Heart left ventricle (tissue), 16 donors: ENCODE measurements at regions of chr9 and their contacts with region 1.

Region 1: GRCh38 chr9:91193658-91194391 is 167.9 kb downstream of the AUH start:
- DNase-seq: peak; percentile 83 to 94 (median 90)
- ATAC-seq: peak; percentile 48 to 74 (median 72)
- H3K4me3 ChIP-seq: peak overlapping the region; percentile 13 to 70 (median 50)
- H3K27ac ChIP-seq: peak overlapping the region; percentile 95 to 100 (median 98)
- H3K4me1 ChIP-seq: peaks cover 6 to 75% (median 43%) of the 10 kb centered on the region in 12 donors
- H3K27me3 ChIP-seq: no peaks in the 10 kb centered on the region
- CTCF ChIP-seq: peak in 2 of 12 donors; percentile 10 to 19
- POLR2A ChIP-seq: no peak

Region 2: DNA sequence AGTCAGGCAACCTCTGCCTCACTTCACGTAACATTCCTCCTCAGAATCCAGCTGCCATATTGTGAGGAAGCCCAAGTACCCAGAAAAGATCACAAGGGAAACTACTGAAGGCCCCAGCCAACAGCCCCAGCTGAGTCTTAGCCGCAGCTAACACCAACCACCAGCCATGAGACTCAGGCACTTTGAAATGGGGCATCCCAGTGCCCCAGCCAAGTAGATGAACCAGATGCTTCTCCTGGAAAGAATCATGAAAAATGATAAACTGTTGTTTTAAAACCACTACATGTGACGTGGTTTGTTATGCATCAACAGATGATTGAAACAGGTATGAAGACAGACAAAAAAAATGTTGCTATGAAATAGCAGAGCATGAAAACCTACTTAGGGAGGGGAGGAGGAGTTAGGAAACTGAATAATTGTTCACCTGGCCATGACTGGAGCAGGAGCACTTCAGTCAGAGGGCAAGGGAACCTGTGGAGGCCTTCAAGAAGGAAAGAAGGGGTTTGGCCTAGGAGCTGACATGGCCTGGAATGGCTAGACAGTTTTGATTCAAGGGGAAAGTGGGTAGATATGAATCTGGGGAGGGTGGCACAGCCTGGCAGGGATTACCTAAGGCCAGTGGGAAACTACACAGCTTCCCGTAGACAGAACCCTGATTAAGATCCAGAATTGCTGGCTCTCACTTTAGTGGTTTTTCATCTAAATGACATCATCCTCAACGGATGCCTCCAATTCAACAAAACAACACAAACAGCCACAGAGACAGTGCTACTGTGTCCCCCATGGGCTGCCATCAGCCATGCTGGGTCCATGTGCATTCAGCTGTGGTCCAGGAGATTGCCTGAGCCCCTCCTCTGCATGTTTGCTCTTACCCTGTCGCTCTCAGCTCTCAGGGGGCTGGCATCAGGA is 180.6 kb before region 1 on chr9:
- intact Hi-C with region 1: no loop called
- DNase-seq: no peak
- ATAC-seq: no peak
- H3K4me3 ChIP-seq: no peak overlapping the region
- H3K27ac ChIP-seq: no peak overlapping the region
- H3K4me1 ChIP-seq: no peaks in the 10 kb centered on the region
- H3K27me3 ChIP-seq: peaks cover 0 to 5% (median 0%) of the 10 kb centered on the region in 9 donors
- CTCF ChIP-seq: no peak
- POLR2A ChIP-seq: no peak

Region 3: GRCh38 chr9:91036826-91037510 is 156.9 kb before region 1 on chr9:
- intact Hi-C with region 1: loop called in 1 of 10 experiments (anchors 10 kb)
- DNase-seq: peak; percentile 76 to 82 (median 78)
- ATAC-seq: peak; percentile 86 to 99 (median 98)
- H3K4me3 ChIP-seq: no peak overlapping the region
- H3K27ac ChIP-seq: no peak overlapping the region
- H3K4me1 ChIP-seq: peaks cover 0 to 20% (median 10%) of the 10 kb centered on the region in 12 donors
- H3K27me3 ChIP-seq: peaks cover 0 to 7% (median 0%) of the 10 kb centered on the region in 9 donors
- CTCF ChIP-seq: peak; percentile 55 to 78 (median 64)
- POLR2A ChIP-seq: no peak

Region 4: DNA sequence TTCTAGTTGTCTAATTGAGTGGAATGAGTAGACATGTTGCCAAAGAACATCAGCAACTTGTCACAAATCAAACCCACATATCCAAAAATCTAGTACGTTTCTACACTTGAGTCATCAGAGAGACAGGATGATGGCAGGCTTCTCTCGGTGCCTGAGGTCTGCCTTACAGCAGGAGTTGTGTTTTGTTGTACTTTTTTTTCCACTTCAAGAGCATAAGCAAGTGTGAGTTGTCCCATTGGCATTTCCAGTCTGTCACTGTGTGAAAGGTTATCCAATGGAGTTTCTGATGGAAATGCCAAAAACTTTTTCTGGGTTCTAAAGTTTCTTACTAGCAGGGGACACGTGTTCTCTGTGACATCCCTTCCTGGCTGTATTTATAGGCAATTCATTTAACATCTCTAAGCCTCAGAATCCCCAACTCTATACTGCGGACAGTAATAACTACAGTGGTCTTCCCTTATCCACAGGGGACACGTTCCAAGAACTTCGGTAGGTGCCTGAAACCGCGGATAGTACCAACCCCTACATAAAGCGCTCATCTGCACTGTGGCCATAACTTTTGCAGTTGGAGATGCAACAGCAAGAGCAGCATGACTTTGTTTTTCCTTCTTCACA is 145.7 kb before region 1 on chr9:
- intact Hi-C with region 1: no loop called
- DNase-seq: no peak
- ATAC-seq: no peak
- H3K4me3 ChIP-seq: no peak overlapping the region
- H3K27ac ChIP-seq: no peak overlapping the region
- H3K4me1 ChIP-seq: peaks cover 0 to 8% (median 0%) of the 10 kb centered on the region in 12 donors
- H3K27me3 ChIP-seq: peaks cover 0 to 12% (median 0%) of the 10 kb centered on the region in 9 donors
- CTCF ChIP-seq: no peak
- POLR2A ChIP-seq: no peak

Region 5: DNA sequence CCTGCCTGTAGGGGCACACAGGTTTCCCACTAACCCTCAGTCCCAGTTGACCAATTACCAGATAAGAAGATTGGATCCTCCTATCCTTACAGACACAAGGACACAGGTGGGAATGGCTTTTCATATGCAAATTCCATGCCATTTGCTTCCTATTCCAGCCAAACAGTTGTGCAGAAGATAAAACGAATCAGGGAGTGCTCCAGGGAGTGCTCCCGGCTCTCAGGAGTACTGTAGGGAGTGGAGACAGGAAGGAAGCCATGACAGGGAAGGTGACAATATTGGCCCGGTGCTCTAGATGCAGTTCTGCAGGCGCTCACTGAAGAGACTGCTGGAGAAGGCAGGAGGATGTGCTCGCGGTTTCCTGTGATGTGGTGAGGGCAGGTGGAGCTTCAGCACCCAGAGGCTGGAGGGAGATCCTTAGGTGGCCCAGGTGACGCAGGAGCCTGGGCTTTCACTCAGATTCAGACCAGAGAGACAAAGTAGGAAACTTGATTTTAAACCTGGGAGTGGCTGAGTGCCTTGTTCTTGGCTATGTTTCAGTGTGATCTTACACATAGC is 92.1 kb before region 1 on chr9:
- intact Hi-C with region 1: loop called in 7 of 10 experiments (anchors 2 to 5 kb)
- DNase-seq: no peak
- ATAC-seq: no peak
- H3K4me3 ChIP-seq: no peak overlapping the region
- H3K27ac ChIP-seq: peak overlapping the region in 10 of 12 donors; percentile 62 to 93 (median 80)
- H3K4me1 ChIP-seq: peaks cover 3 to 41% (median 30%) of the 10 kb centered on the region in 12 donors
- H3K27me3 ChIP-seq: no peaks in the 10 kb centered on the region
- CTCF ChIP-seq: no peak
- POLR2A ChIP-seq: no peak

Region 6: DNA sequence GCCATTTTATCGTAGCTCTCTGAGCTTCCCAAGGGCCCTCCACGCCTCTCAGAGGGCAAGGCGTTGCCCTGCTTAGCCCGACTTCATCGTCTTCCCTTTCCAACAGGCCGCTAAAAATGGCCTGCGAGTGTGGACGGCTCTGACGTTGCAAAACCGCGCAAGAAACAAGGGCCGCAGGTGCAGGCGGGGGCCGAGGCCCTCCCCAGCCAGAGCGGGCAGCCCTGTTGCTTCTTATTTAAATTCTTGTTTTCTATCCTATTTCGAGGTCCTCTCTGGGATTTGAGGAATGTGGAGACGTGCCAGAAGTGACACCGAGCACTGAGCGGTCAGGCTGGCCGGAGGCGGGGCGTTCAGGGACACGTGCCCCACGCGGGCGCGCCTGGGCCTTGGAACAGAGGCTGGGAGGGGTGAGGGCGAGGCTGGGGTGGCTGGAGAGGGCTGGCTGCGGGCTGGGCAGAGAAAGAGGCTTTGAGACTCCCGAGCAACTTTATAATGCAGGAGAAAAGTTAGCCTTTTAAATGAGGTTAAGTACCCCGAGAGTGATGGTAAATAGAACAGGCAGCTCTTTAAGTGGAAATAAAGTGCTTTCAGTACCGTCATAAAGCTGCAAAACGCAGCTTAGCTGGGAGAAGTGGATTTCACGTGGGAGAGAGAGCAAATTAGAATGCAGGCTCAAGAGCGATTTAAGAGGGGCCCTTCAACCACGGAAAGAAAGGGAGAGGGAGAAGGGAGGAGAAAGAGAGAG is 75.7 kb before region 1 on chr9:
- intact Hi-C with region 1: loop called in 6 of 10 experiments (anchors 1 to 10 kb)
- DNase-seq: peak; percentile 81 to 93 (median 89)
- ATAC-seq: peak; percentile 83 to 99 (median 98)
- H3K4me3 ChIP-seq: peak overlapping the region in 11 of 12 donors; percentile 9 to 53 (median 43)
- H3K27ac ChIP-seq: peak overlapping the region in 11 of 12 donors; percentile 22 to 85 (median 70)
- H3K4me1 ChIP-seq: peaks cover 0 to 40% (median 21%) of the 10 kb centered on the region in 12 donors
- H3K27me3 ChIP-seq: no peaks in the 10 kb centered on the region
- CTCF ChIP-seq: no peak
- POLR2A ChIP-seq: peak in 1 of 2 donors; percentile 5

Region 7: DNA sequence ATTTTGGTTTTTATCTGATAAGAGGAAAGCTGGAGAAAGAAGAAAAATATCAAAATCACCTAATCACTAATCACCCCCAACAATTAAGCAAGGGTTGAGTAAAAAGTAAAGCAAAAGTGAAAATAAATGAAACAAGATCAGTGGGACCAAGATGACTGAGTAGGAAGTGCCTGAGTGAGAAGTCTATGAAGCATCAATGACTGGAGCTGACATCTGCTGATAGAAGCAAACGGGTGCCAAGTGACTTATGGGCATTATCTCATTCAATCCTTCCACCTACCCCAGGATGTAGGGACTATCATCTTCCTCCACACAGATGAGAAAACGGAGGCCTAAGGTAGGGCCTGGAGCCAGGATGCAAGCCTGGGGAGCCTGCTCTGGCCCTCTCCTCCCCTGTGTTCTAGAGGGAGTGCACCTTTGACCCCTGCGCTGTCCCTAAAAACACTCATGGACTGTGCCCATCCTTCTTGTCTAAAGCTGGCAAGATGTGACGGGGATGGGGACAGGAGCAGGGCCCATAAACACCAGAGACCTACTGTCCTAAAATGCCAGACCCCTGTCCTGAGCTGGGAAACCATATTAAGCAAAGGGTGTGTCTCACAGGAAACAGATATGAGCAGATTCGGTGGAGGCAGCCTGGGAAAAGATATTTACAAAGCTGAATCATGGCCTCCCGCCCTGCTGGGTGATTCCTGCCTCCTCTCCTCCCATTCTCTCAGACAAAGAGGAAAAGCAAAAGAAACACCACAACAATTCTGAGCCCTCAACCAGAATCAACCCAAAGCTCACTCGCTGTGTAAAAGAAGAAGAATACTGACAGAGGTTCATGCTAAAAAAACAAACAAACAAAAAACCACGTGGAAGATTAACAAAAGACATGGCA is 51.8 kb after region 1 on chr9:
- intact Hi-C with region 1: loop called in 1 of 10 experiments (anchors 10 kb)
- DNase-seq: no peak
- ATAC-seq: peak in 2 of 4 donors; percentile 34 to 37
- H3K4me3 ChIP-seq: no peak overlapping the region
- H3K27ac ChIP-seq: no peak overlapping the region
- H3K4me1 ChIP-seq: peaks cover 0 to 34% (median 17%) of the 10 kb centered on the region in 12 donors
- H3K27me3 ChIP-seq: no peaks in the 10 kb centered on the region
- CTCF ChIP-seq: no peak
- POLR2A ChIP-seq: no peak

Region 8: GRCh38 chr9:91361291-91362050 is 167.6 kb after region 1 on chr9 and contains the start of gene AUH:
- intact Hi-C with region 1: loop called in 5 of 10 experiments (anchors 2 to 10 kb)
- DNase-seq: peak; percentile 87 to 95 (median 88)
- ATAC-seq: peak; percentile 89 to 100 (median 98)
- H3K4me3 ChIP-seq: peak within 1 kb of the TSS; percentile 93 to 100 (median 98)
- H3K27ac ChIP-seq: peak within 1 kb of the TSS; percentile 67 to 97 (median 92)
- H3K4me1 ChIP-seq: peaks cover 0 to 43% (median 28%) of the 10 kb centered on the region in 12 donors
- H3K27me3 ChIP-seq: no peaks in the 10 kb centered on the region
- CTCF ChIP-seq: no peak
- POLR2A ChIP-seq: peak in 1 of 2 donors; percentile 61
- total RNA-seq, gene AUH: 28.5 to 54.7 (median 39.7) TPM